Pancreas (tissue), 10 donors: ENCODE measurements at regions of chr3 and their contacts with region 1.

Region 1: GRCh38 chr3:194315088-194315964 is 35.8 kb downstream of the CPN2 start:
- DNase-seq: peak; percentile 69 to 98 (median 88)
- ATAC-seq: peak; percentile 84 to 92 (median 90)
- H3K4me3 ChIP-seq: peak overlapping the region; percentile 20 to 57 (median 38)
- H3K27ac ChIP-seq: peak overlapping the region in 2 of 4 donors; percentile 30 to 34
- H3K4me1 ChIP-seq: peaks cover 3 to 5% (median 4%) of the 10 kb centered on the region in 3 donors
- H3K27me3 ChIP-seq: peaks cover 0 to 8% (median 0%) of the 10 kb centered on the region in 4 donors
- CTCF ChIP-seq: peak; percentile 80 to 97 (median 93)

Region 2: GRCh38 chr3:193665370-193665989 is 649.8 kb before region 1 on chr3:
- intact Hi-C with region 1: loop called in 1 of 3 experiments (anchors 10 kb)
- DNase-seq: no peak
- ATAC-seq: no peak
- H3K4me3 ChIP-seq: no peak overlapping the region
- H3K27ac ChIP-seq: no peak overlapping the region
- H3K4me1 ChIP-seq: no peaks in the 10 kb centered on the region
- H3K27me3 ChIP-seq: no peaks in the 10 kb centered on the region
- CTCF ChIP-seq: peak in 3 of 4 donors; percentile 28 to 41 (median 32)

Region 3: GRCh38 chr3:193780810-193781472 is 534.4 kb before region 1 on chr3:
- intact Hi-C with region 1: loop called in 2 of 3 experiments (anchors 5 kb)
- DNase-seq: peak; percentile 53 to 82 (median 73)
- ATAC-seq: peak; percentile 82 to 94 (median 94)
- H3K4me3 ChIP-seq: no peak overlapping the region
- H3K27ac ChIP-seq: no peak overlapping the region
- H3K4me1 ChIP-seq: no peaks in the 10 kb centered on the region
- H3K27me3 ChIP-seq: no peaks in the 10 kb centered on the region
- CTCF ChIP-seq: peak; percentile 21 to 61 (median 60)

Region 4: DNA sequence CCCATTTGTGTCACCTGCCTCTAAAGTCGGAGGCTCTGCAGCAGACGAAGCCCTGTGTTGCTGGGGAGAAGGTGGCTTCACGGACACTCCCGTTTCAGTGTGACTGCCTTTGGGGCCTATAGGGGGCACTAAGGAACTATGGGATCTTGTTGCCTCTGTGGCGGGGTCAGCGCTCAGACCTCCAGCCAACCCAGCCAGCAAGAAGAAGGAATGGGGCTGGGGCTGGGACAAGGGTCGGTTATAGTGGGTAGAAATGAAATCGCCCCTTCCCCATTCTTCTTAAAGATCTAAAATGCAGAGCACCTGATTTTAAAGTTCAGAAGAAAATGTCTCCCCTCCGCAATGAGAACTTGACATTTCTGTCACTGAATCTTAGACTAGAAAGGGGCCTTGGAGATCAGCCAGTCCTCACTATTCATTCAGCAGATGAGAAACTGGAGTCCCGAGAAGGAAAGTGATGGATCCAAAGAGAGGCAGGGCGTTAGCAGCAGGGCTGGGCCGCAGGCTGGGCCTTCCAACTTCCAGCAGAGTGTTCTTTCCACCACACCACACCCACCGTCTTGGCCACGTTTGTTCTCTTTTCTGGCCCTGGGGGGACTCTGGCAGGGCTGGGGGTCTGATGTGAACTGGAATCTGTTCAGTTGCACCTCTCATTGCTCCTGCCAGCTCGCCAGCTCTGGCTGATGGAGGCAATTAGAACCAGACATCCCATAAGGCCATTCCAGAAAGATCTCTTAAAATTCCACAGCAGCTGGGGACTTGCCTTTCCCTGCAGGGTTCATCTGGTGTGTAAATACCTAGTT is 526.9 kb before region 1 on chr3:
- intact Hi-C with region 1: loop called in 2 of 3 experiments (anchors 5 kb)
- DNase-seq: peak; percentile 47 to 73 (median 66)
- ATAC-seq: peak; percentile 78 to 95 (median 92)
- H3K4me3 ChIP-seq: no peak overlapping the region
- H3K27ac ChIP-seq: no peak overlapping the region
- H3K4me1 ChIP-seq: peaks cover 16 to 27% (median 23%) of the 10 kb centered on the region in 3 donors
- H3K27me3 ChIP-seq: no peaks in the 10 kb centered on the region
- CTCF ChIP-seq: peak; percentile 57 to 78 (median 65)

Region 5: DNA sequence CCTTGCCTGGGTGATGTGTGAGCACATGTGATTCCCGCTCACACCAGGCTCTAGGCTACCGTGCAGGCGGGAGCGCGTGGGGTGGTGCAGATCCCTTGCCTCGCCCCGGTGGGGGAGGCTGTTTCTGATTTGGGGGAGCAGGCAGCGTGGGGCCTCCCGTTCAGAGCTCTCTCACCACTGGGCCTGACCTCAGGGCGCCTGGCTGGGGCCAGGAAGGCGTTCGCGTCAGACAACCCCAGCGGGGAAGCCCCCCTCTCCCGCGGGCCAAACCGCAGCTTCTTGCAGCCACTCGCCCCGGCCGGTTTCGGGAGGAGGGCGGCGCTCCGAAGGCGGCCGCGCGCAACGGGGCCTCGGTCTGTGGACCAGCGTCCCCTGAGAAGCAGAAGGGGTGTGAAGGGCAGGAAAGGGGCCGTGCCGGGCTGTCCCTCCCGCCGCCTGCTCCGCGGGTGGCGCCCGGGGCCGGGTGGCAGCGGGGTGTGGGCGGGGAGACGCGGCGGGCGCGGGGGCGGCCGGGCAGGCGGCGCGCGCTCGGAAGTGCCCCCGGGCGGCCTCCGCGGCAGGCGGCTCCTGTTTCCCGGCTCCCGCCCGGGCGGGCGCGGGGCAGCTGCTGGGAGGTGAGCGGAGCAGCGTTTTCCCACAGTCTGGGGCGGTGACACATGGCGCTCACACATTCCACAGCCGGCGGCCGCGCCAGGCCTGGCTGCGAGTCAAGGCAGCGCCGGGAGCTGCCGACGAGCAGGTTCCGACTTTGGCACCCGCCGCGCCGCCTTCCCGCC is 244.5 kb before region 1 on chr3:
- intact Hi-C with region 1: loop called in 1 of 3 experiments (anchors 10 kb)
- DNase-seq: peak; percentile 89 to 96 (median 95)
- ATAC-seq: peak; percentile 84 to 88 (median 85)
- H3K4me3 ChIP-seq: peak overlapping the region; percentile 25 to 47 (median 34)
- H3K27ac ChIP-seq: peak overlapping the region; percentile 89 to 99 (median 94)
- H3K4me1 ChIP-seq: peaks cover 20 to 25% (median 21%) of the 10 kb centered on the region in 3 donors
- H3K27me3 ChIP-seq: no peaks in the 10 kb centered on the region
- CTCF ChIP-seq: no peak

Region 6: DNA sequence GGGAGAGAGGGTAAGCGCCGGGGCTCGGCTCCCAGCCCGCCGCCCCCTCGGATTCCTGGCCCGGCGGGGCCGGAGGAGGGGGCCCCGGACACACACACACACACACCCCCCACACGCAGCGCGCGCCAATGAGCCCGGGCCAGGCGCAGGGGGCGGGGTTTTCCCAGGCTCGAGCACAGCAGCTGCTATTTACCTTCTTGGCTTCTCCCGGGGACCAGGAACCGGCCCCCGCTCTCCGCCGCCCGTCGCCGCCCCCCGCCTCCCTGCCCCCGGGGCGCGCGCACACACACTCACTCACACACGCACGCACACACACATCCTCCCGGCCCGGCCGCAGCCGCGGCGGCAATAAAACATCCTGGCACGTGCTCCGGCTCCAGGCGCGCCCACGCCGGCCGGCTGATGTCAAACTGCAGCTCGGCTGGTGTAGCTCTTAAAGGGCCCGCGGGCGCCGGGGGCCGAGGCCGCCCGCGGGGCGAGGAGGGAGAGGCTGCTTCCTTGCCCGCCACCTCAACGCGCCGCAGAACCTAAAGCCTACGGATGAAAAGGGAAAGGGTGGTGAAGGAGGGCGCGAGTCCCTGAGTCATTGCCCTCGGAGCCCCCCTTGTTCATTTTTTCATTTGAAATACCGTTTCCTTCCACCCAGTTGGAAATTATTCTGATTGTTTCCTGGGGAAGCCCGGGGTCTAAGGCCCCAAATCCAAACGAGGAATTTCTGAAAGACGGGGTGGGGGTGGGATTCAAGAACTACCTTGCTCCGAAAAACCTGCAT is 180.4 kb before region 1 on chr3:
- intact Hi-C with region 1: loop called in 2 of 3 experiments (anchors 5 to 10 kb)
- DNase-seq: peak; percentile 95 to 97 (median 96)
- ATAC-seq: peak; percentile 62 to 72 (median 68)
- H3K4me3 ChIP-seq: peak overlapping the region; percentile 16 to 72 (median 46)
- H3K27ac ChIP-seq: peak overlapping the region; percentile 95 to 98 (median 96)
- H3K4me1 ChIP-seq: peaks cover 15 to 29% (median 29%) of the 10 kb centered on the region in 3 donors
- H3K27me3 ChIP-seq: no peaks in the 10 kb centered on the region
- CTCF ChIP-seq: no peak

Region 7: DNA sequence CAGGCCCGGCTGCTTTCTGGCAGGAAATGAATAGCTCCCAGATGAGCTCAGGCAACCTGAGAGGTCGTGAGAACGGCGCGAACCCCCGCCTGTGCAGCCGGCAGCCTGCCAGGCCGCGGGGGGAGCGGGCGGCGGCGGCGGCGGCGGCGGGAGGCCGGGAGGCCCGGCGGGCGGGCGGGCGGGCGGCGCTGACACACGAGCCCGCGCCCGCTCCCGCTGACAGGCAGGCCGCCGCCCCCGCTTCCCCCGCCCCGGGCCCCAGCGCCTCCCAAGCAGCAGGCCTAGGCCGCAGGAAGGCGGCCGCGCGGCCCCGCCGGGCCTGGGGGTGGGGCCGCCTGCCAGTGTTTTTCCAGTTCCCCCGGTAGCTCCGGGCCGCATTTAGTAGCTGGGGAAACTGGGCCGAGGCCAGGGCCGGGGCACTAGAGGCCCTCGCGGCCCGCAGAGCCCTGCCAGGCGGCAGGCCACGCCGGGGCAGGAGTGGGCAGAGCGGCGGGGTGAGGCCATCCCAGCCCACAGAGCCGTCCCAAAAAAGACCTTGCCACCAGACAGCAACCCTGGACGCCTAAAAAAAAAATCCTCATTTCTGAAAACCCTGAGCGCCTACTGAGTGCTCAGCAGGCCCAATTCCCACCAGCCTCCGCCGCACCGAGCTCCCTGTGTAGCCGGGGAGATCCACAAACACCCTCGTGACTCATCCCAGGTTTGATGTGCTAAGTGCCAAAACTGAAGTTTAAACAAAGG is 173.7 kb before region 1 on chr3:
- intact Hi-C with region 1: loop called in 2 of 3 experiments (anchors 5 to 10 kb)
- DNase-seq: peak; percentile 94 to 97 (median 94)
- ATAC-seq: peak; percentile 72 to 79 (median 76)
- H3K4me3 ChIP-seq: peak overlapping the region in 2 of 4 donors; percentile 42 to 47
- H3K27ac ChIP-seq: peak overlapping the region; percentile 95 to 99 (median 98)
- H3K4me1 ChIP-seq: peaks cover 10 to 35% (median 24%) of the 10 kb centered on the region in 3 donors
- H3K27me3 ChIP-seq: no peaks in the 10 kb centered on the region
- CTCF ChIP-seq: no peak

Region 8: GRCh38 chr3:194184265-194184751 is 131.0 kb before region 1 on chr3:
- intact Hi-C with region 1: no loop called
- DNase-seq: no peak
- ATAC-seq: peak in 2 of 4 donors; percentile 59 to 61
- H3K4me3 ChIP-seq: no peak overlapping the region
- H3K27ac ChIP-seq: no peak overlapping the region
- H3K4me1 ChIP-seq: peaks cover 0 to 7% (median 4%) of the 10 kb centered on the region in 3 donors
- H3K27me3 ChIP-seq: no peaks in the 10 kb centered on the region
- CTCF ChIP-seq: no peak

Region 9: DNA sequence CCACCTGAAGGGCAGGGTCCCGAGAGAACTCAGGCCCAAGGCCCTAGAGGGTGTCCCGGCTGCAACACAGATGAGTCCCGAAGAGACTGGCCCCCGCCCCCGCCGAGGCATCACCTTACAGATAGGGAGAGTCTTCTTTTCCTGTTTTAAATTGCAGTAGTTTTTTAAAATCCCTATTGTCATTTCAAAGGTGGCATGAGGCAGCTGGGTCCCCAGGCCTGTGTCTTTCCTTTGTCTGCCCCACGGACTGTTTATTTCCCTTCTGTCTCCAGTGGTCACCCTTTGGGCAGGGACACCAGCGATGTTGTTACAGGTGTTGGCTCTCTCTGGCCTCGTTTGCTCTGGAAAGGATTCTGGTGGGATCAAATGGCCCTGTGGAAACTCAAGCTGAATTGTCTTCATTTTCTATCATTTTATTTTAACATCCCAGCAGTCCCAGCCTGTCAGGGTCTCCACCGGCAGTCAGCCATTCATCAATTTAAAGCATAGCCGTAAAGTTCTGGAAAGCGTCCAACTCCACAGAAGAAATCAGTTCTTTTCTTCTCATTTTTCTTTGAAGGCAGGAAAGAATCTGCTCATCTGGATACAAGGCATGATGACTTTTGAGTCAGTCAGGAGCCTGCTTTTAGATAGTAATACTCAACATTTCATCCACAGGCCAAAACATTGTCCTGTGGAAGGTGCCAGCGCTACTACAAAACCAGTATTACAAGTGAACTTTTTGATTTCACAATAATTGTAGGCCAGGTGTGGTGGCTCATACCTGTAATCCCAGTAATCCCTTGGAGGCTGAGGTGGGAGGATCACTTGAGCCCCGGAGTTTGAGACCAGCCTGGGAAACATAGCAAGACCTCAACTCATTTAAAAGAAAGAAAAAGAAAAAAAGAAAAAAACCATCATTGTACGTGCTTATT is 83.1 kb before region 1 on chr3:
- intact Hi-C with region 1: no loop called
- DNase-seq: no peak
- ATAC-seq: peak in 1 of 4 donors; percentile 31
- H3K4me3 ChIP-seq: no peak overlapping the region
- H3K27ac ChIP-seq: no peak overlapping the region
- H3K4me1 ChIP-seq: no peaks in the 10 kb centered on the region
- H3K27me3 ChIP-seq: no peaks in the 10 kb centered on the region
- CTCF ChIP-seq: no peak

Region 10: DNA sequence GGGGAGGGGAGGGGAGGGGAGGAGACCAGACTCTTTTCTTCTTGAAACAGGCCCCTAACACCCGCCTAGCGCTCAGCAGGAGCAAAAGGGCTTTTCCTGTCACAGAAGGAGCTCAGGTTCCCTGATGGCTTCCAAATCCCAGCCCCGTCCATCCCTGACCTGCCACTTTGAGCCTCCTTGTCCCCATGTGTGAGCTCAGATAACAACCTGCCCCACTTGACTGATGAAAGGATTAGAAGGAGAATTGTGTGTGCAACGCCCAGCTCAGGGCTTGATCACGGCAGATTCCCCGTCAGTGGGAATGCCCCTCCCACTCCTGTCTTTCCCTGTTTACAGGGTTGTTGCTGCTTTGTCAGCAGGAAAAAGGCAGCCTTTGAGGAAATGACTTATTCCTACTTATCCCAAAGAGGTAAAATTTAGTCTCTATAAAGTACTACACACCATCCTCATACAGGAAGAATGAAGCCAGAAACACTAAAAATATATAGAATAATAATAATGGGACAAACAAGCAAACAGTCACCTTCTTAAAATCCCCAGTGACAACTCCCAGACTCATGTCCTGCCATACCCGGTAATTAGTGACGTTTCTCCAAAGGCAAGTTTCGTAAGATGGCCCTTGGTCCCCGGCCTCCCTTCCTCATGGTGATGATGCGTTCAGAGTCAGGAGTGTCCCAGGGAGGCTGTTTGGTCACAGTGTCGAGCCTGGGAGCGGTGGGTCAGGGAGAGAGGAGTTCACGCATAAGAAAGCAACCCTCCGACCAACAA is 60.3 kb after region 1 on chr3:
- intact Hi-C with region 1: no loop called
- DNase-seq: no peak
- ATAC-seq: no peak
- H3K4me3 ChIP-seq: no peak overlapping the region
- H3K27ac ChIP-seq: no peak overlapping the region
- H3K4me1 ChIP-seq: no peaks in the 10 kb centered on the region
- H3K27me3 ChIP-seq: no peaks in the 10 kb centered on the region
- CTCF ChIP-seq: no peak

Region 11: DNA sequence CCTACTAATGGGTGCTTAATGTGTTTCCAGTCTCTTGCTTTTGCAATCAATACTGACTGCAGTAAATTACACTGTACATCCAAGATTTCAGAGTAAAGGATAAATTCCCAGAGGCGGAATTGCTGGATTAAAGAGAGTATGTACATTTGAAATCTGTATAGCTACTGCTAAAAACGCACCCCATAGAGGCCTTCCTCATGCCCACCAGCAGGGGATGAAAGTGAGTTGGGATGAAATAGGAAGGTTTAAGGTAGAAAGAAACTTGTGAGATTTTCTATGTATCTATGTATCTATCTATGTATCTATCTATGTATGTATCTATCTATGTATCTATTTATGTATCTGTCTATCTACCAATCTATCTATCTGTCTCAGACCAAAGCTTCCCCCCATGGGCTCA is 289.5 kb after region 1 on chr3:
- intact Hi-C with region 1: no loop called
- DNase-seq: no peak
- ATAC-seq: no peak
- H3K4me3 ChIP-seq: no peak overlapping the region
- H3K27ac ChIP-seq: no peak overlapping the region
- H3K4me1 ChIP-seq: no peaks in the 10 kb centered on the region
- H3K27me3 ChIP-seq: no peaks in the 10 kb centered on the region
- CTCF ChIP-seq: no peak